ENCODE measurements at regions of chr1 and their contacts with region 1.

Region 1: DNA sequence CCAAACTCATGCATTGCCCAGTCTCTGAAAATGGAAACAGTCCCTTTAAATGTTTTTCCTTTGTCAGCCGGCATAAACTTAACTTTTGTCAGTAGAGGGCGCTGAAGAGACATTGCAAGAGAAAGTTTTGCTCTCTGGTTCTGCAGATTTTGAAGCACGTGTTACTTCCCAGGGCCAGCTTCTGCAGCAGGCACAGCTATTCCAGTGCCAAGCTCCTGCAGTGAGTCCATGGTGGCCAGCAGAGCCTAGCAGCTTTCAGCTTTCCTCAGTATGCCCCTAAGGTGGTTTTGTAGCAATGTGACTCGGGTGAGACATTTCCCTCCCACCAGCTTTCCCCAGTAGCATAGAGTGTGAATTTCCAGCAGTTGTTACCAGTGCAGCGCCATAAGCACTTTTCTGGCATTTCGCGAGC is 2.6 kb upstream of the IFI44L start:
- DNase-seq: peak; percentile 13 to 82 (median 79)
- ATAC-seq: peak; percentile 84
- H3K4me3 ChIP-seq: no peak overlapping the region
- H3K4me3 Mint-ChIP-seq: peak overlapping the region in 3 of 10 donors; percentile 26 to 56 (median 44)
- H3K27ac ChIP-seq: no peak overlapping the region
- H3K27ac Mint-ChIP-seq: peak overlapping the region in 8 of 9 donors; percentile 23 to 99 (median 72)
- H3K4me1 ChIP-seq: peaks cover 7 to 19% of the 10 kb centered on the region in 2 donors
- H3K4me1 Mint-ChIP-seq: peaks cover 18 to 51% (median 42%) of the 10 kb centered on the region in 7 donors
- H3K27me3 ChIP-seq: no peaks in the 10 kb centered on the region
- H3K27me3 Mint-ChIP-seq: peaks cover 0 to 14% (median 0%) of the 10 kb centered on the region in 5 donors

Region 2: DNA sequence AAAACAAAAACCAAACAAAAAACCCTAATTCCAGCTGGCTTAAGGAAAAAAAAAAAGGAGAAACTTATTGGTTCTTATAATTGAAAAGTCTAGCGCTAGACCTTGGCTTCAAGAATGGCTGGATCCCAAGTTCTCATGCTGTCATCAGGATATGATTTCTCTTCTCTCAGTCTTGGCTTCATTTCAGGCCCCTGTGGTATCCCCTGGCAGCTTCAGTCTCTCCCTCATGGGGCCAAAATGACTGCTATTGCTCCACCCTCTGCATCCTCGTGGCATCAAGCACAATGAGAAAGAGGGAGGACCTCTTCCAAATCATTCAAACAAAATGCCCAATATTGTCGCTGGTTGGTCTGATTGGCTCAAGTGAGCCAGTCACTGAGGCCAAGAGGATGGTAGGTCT is 491.1 kb before region 1 on chr1:
- CTCF ChIA-PET with region 1: interaction called, 6 read pairs
- POLR2A ChIA-PET with region 1: no interaction called
- intact Hi-C with region 1: loop called in 1 of 2 experiments (anchors 1 kb)
- DNase-seq: no peak
- ATAC-seq: no peak
- H3K4me3 ChIP-seq: no peak overlapping the region
- H3K4me3 Mint-ChIP-seq: no peak overlapping the region
- H3K27ac ChIP-seq: no peak overlapping the region
- H3K27ac Mint-ChIP-seq: no peak overlapping the region
- H3K4me1 ChIP-seq: no peaks in the 10 kb centered on the region
- H3K4me1 Mint-ChIP-seq: no peaks in the 10 kb centered on the region
- H3K27me3 ChIP-seq: no peaks in the 10 kb centered on the region
- H3K27me3 Mint-ChIP-seq: peaks cover 0 to 6% (median 0%) of the 10 kb centered on the region in 5 donors

Region 3: DNA sequence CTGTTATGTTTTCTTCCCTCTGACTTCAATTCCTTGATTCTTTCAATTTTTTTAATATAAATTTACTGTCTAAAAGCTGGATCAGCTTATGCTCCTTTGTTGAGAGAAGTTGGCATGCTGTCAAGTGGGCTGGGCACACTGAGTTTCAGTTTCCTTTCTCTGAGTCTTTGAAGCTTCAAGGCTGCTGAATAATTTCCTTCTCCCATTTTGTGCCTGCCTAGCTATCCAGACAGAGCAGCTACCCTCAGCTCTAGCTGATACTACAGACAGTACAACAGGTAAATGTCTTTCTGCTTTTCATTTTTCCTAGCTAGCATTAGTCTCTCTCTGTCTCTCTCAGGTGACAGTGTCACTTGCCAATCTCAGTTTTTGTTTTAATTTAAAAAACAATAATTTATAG is 32.0 kb after region 1 on chr1 and contains the start of gene IFI44:
- CTCF ChIA-PET with region 1: interaction called, 11 read pairs
- POLR2A ChIA-PET with region 1: interaction called, 14 read pairs
- intact Hi-C with region 1: loop called (anchors 1 kb)
- DNase-seq: peak; percentile 22 to 83 (median 79)
- ATAC-seq: peak; percentile 91
- H3K4me3 ChIP-seq: peak within 1 kb of the TSS; percentile 68
- H3K4me3 Mint-ChIP-seq: peak within 1 kb of the TSS; percentile 81 to 100 (median 92)
- H3K27ac ChIP-seq: peak within 1 kb of the TSS; percentile 67
- H3K27ac Mint-ChIP-seq: peak within 1 kb of the TSS; percentile 82 to 97 (median 93)
- H3K4me1 ChIP-seq: peaks cover 36 to 40% of the 10 kb centered on the region in 2 donors
- H3K4me1 Mint-ChIP-seq: peaks cover 39 to 80% (median 64%) of the 10 kb centered on the region in 7 donors
- H3K27me3 ChIP-seq: no peaks in the 10 kb centered on the region
- H3K27me3 Mint-ChIP-seq: no peaks in the 10 kb centered on the region
- total RNA-seq, gene IFI44: 24.3 to 142 (median 33.1) TPM

Region 4: DNA sequence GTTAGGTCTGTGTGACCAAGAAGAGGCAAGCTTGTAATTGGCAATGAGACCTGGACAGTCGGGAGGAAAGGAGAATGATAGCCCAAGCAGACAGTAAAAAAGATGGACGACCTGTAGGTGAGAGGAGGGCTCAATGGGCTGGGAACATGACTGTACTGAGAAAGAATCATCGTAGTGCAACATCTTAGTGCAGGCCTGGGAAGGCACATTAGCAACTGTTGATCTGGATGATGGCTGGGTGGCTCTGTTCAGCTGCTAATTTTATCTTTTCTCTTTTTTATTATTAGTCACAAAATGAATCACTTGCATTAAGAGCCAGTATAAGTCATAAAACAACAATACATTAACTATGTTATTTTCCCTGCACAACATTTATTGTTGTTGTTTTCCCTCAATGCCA is 64.9 kb after region 1 on chr1:
- CTCF ChIA-PET with region 1: interaction called, 17 read pairs
- POLR2A ChIA-PET with region 1: interaction called, 3 read pairs
- intact Hi-C with region 1: no loop called
- DNase-seq: no peak
- ATAC-seq: no peak
- H3K4me3 ChIP-seq: no peak overlapping the region
- H3K4me3 Mint-ChIP-seq: no peak overlapping the region
- H3K27ac ChIP-seq: no peak overlapping the region
- H3K27ac Mint-ChIP-seq: peak overlapping the region in 1 of 9 donors; percentile 10
- H3K4me1 ChIP-seq: no peaks in the 10 kb centered on the region
- H3K4me1 Mint-ChIP-seq: peaks cover 0 to 17% (median 0%) of the 10 kb centered on the region in 7 donors
- H3K27me3 ChIP-seq: no peaks in the 10 kb centered on the region
- H3K27me3 Mint-ChIP-seq: peaks cover 0 to 16% (median 6%) of the 10 kb centered on the region in 5 donors

Region 5: GRCh38 chr1:79353224-79353623 is 735.6 kb after region 1 on chr1:
- CTCF ChIA-PET with region 1: no interaction called
- POLR2A ChIA-PET with region 1: no interaction called
- intact Hi-C with region 1: loop called in 1 of 2 experiments (anchors 5 kb)
- DNase-seq: no peak
- ATAC-seq: no peak
- H3K4me3 ChIP-seq: no peak overlapping the region
- H3K4me3 Mint-ChIP-seq: no peak overlapping the region
- H3K27ac ChIP-seq: no peak overlapping the region
- H3K27ac Mint-ChIP-seq: no peak overlapping the region
- H3K4me1 ChIP-seq: no peaks in the 10 kb centered on the region
- H3K4me1 Mint-ChIP-seq: no peaks in the 10 kb centered on the region
- H3K27me3 ChIP-seq: no peaks in the 10 kb centered on the region
- H3K27me3 Mint-ChIP-seq: no peaks in the 10 kb centered on the region